ENCODE measurements at regions of chr16 and their contacts with region 1.

Region 1: GRCh38 chr16:21075252-21075651 is 75.4 kb downstream of the DNAH3 start:
- DNase-seq: no peak
- H3K4me3 ChIP-seq: no peak overlapping the region
- H3K27ac ChIP-seq: no peak overlapping the region
- H3K4me1 ChIP-seq: no peaks in the 10 kb centered on the region
- H3K27me3 ChIP-seq: no peaks in the 10 kb centered on the region
- CTCF ChIP-seq: no peak
- EP300 ChIP-seq: no peak
- POLR2A ChIP-seq: no peak

Region 2: GRCh38 chr16:20938426-20938825 is 136.8 kb before region 1 on chr16:
- intact Hi-C with region 1: loop called (anchors 10 kb)
- DNase-seq: no peak
- H3K4me3 ChIP-seq: no peak overlapping the region
- H3K27ac ChIP-seq: no peak overlapping the region
- H3K4me1 ChIP-seq: no peaks in the 10 kb centered on the region
- H3K27me3 ChIP-seq: no peaks in the 10 kb centered on the region
- CTCF ChIP-seq: no peak
- EP300 ChIP-seq: no peak
- POLR2A ChIP-seq: no peak

Region 3: DNA sequence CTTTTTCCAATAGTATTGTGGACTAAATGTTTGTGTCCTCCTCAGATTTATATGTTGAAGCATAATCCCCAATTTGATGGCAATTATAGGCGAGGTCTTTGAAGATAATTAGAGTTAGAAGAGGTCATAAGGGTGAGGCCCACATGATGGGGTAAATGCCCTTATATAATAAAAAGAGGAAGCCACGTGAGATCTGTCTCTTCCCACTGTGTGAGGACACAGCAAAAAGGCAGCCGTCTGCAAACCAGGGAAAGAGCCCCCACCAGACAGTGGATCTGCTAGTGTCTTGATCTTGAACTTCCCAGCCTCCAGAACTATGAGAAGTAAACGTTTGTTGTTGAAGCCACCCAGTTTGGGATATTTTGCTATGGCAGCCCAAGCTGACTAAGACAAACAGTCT is 98.7 kb before region 1 on chr16:
- intact Hi-C with region 1: no loop called
- DNase-seq: no peak
- H3K4me3 ChIP-seq: no peak overlapping the region
- H3K27ac ChIP-seq: no peak overlapping the region
- H3K4me1 ChIP-seq: no peaks in the 10 kb centered on the region
- H3K27me3 ChIP-seq: no peaks in the 10 kb centered on the region
- CTCF ChIP-seq: no peak
- EP300 ChIP-seq: no peak
- POLR2A ChIP-seq: no peak

Region 4: DNA sequence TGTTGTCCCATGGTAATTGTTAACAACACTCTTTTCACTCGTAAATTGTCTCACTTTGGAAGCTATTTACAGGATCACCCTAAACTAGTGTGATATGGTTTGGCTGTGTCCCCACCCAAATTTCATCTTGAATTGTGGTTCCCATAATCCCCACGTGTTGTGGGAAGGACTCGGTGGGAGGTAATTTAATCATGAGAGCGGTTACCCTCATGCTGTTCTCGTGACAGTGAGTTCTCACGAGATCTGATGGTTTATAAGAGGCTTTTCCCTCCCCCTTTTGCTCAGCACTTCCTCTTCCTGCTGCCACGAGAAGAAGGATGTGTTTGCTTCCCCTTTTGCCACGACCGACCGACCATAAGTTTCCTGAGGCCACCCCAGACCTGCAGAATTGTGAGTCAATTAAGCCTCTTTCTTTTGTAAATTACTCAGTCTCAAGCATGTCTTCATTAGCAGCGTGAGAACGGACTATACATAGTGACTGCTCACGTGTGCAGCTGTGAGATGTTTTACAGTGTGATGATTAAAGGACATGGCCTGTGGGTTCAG is 41.0 kb after region 1 on chr16:
- intact Hi-C with region 1: no loop called
- DNase-seq: peak; percentile 45
- H3K4me3 ChIP-seq: peak overlapping the region in 1 of 4 donors; percentile 27
- H3K27ac ChIP-seq: no peak overlapping the region
- H3K4me1 ChIP-seq: no peaks in the 10 kb centered on the region
- H3K27me3 ChIP-seq: no peaks in the 10 kb centered on the region
- CTCF ChIP-seq: no peak
- EP300 ChIP-seq: no peak
- POLR2A ChIP-seq: no peak

Region 5: DNA sequence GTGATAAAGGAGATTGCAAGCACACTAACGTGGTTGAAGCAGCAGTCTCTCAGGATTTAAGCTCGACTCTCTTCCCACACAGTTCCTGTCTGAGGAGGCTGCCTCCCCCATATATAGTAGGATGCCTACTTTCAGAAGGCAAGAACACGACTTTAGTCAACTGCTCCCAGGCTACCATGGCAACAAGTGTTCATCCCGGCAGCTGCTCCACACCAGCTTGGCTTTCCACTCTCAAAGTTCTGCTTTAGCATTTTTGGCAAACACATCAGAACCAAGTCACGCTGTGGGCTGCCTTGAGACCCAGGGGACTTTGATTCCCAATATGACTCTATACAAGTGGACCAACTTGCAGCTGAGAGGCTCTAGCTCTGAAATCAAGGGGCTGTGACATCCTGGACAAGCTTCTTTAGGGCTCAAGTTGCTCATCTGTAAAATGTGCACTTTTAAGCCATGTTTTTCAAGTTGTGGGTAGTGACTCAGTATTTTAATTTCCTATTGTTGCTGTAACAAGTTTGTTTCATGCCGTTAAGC is 119.6 kb after region 1 on chr16:
- intact Hi-C with region 1: no loop called
- DNase-seq: no peak
- H3K4me3 ChIP-seq: no peak overlapping the region
- H3K27ac ChIP-seq: no peak overlapping the region
- H3K4me1 ChIP-seq: no peaks in the 10 kb centered on the region
- H3K27me3 ChIP-seq: peaks cover 0 to 5% (median 0%) of the 10 kb centered on the region in 4 donors
- CTCF ChIP-seq: no peak
- EP300 ChIP-seq: no peak
- POLR2A ChIP-seq: no peak

Region 6: DNA sequence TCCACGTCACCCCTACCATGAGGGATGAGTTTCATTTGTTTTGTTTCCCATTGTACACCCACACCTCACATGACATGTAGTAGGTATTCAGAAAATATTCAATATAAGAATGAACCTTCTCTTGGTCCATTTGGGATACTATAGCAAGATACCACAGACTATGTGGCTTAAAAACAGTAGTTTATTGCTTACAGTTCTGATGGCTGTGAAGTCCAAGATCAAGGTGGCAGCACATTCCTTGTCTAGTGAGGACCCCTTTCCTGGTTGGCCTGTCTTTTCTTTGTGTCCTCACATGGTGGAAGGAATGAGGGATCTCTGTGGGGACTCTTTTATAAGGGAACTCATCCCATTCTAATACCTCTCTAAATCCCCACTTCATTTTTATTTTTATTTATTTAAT is 239.1 kb after region 1 on chr16:
- intact Hi-C with region 1: no loop called
- DNase-seq: no peak
- H3K4me3 ChIP-seq: no peak overlapping the region
- H3K27ac ChIP-seq: no peak overlapping the region
- H3K4me1 ChIP-seq: no peaks in the 10 kb centered on the region
- H3K27me3 ChIP-seq: no peaks in the 10 kb centered on the region
- CTCF ChIP-seq: no peak
- EP300 ChIP-seq: no peak
- POLR2A ChIP-seq: no peak

Measured in esophagus muscularis mucosa (tissue), 4 donors.